ENCODE measurements at regions of chr18 and their contacts with region 1.

Region 1: DNA sequence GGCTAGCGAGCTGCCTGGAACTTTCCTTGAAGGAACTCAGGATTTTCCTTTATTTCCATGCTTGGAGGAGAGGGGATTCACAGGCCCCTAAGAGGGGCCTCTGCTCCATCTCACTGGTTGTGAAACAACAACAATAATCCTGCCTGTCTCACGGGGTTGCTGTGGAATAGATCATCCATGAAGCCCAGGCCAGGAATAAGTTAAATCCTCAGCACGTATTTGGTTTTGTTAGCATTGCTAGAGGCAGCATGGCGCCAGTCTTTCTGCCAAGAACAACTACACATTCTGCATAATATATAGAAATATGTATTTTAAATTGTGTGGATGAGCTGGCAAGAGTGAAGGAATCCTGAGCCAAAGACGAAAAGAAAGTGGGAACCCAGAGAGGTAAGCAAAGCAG is 80.8 kb upstream of the L3MBTL4 start:
- DNase-seq: no peak
- H3K4me3 ChIP-seq: no peak overlapping the region
- H3K27ac ChIP-seq: no peak overlapping the region
- H3K4me1 ChIP-seq: no peaks in the 10 kb centered on the region
- H3K27me3 ChIP-seq: no peaks in the 10 kb centered on the region
- CTCF ChIP-seq: no peak
- POLR2A ChIP-seq: no peak

Region 2: GRCh38 chr18:6401687-6402086 is 93.8 kb before region 1 on chr18:
- CTCF ChIA-PET with region 1: no interaction called
- POLR2A ChIA-PET with region 1: no interaction called
- dilution Hi-C with region 1: no loop called
- intact Hi-C with region 1: loop called (anchors 10 kb)
- DNase-seq: no peak
- H3K4me3 ChIP-seq: no peak overlapping the region
- H3K27ac ChIP-seq: no peak overlapping the region
- H3K4me1 ChIP-seq: no peaks in the 10 kb centered on the region
- H3K27me3 ChIP-seq: no peaks in the 10 kb centered on the region
- CTCF ChIP-seq: no peak
- POLR2A ChIP-seq: no peak